Astrocyte of the cerebellum (primary cell): ENCODE measurements at regions of chr7 and their contacts with region 1.

Region 1: DNA sequence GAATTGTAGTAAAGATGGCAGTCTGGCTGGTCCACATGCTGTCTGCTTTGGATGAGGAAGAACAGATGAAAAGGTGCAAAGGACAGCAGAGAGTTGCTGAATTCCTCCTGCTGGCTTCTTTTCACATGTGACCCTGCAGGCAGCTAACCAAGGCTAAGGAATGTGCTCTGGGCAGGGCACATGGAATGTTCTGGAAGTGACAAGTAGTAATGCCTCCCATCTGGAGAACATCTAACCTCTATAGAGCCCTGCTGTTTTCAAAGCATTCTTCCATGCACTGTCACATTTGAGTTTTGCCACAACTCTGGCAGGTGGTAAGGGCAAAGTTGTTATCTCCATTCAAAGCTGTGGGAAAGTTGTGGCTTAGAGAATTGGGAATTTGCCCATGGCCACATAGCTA is 208.8 kb downstream of the STK31 start:
- DNase-seq: peak; percentile 85
- H3K4me3 ChIP-seq: no peak overlapping the region
- CTCF ChIP-seq: no peak

Region 2: DNA sequence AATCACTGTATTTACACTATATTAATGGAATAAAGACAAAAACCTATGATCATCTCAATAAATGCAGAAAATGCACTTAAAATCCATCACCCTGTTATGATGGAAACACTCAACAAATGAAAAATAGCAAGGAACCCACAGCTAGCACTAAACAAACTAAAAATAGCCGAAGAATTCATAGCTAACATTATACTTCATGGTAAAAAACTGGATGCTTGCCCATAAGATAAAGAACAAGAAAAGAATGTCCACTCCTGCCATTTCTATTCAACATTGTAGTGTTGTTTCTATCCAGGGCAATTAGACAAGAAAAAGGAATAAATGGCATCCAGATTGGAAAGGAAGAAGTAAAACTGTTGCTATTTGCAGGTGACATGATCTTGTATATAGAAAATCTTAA is 66.7 kb before region 1 on chr7:
- in situ Hi-C with region 1: no loop called
- DNase-seq: peak; percentile 2
- H3K4me3 ChIP-seq: no peak overlapping the region
- CTCF ChIP-seq: no peak

Region 3: DNA sequence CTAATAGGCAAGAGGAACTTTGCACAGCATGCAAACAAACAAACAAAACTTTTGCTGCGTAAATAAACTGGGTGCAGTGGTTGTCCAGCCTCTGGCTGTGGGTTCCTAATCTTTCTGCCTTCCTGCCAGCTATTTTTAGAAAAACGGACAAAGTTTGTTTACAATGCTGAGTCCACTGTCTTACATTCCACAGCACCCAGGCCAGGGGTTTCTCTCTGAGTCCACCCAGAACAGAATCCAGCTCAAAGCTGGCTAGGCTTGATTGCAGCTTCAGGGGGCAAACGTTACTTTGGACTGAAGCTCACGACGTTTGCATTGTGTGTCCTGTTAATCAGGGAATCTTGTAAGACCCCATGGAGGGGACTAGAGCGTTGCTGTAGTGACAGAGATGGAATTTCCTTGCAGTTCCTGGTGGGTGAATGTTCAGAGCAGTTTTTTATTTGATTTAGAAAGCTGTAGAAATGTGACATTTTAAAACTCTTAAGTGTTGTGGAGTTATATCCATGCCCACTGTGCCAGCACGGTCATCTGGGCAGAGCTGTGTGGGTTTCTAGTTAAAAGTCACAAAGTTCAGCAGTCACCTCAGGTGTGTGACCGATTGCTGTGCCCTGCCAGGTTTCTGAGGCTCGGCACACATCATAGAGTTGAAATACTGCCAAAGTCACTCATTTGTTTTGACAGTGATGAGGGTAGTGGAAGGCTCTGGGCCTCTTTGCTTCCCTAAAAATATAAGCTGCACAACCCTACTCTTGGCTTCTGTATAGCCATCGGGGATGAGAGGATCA is 38.1 kb after region 1 on chr7:
- in situ Hi-C with region 1: loop called (anchors 5 kb)
- DNase-seq: no peak
- H3K4me3 ChIP-seq: no peak overlapping the region
- CTCF ChIP-seq: no peak